Ovary (tissue), 10 donors: ENCODE measurements at regions of chr20 and their contacts with region 1.

Region 1: GRCh38 chr20:18808712-18809111 is 4.9 kb upstream of the SCP2D1 start:
- DNase-seq: no peak
- H3K4me3 ChIP-seq: no peak overlapping the region
- H3K27ac ChIP-seq: no peak overlapping the region
- H3K4me1 ChIP-seq: no peaks in the 10 kb centered on the region
- H3K27me3 ChIP-seq: no peaks in the 10 kb centered on the region
- CTCF ChIP-seq: no peak
- EP300 ChIP-seq: no peak
- POLR2A ChIP-seq: no peak

Region 2: GRCh38 chr20:18853946-18854646 is 45.4 kb after region 1 on chr20:
- intact Hi-C with region 1: loop called in 1 of 4 experiments (anchors 2 kb)
- DNase-seq: no peak
- H3K4me3 ChIP-seq: no peak overlapping the region
- H3K27ac ChIP-seq: no peak overlapping the region
- H3K4me1 ChIP-seq: no peaks in the 10 kb centered on the region
- H3K27me3 ChIP-seq: no peaks in the 10 kb centered on the region
- CTCF ChIP-seq: no peak
- EP300 ChIP-seq: no peak
- POLR2A ChIP-seq: no peak